T-cell (primary cell): ENCODE measurements at regions of chr16 and their contacts with region 1.

Region 1: DNA sequence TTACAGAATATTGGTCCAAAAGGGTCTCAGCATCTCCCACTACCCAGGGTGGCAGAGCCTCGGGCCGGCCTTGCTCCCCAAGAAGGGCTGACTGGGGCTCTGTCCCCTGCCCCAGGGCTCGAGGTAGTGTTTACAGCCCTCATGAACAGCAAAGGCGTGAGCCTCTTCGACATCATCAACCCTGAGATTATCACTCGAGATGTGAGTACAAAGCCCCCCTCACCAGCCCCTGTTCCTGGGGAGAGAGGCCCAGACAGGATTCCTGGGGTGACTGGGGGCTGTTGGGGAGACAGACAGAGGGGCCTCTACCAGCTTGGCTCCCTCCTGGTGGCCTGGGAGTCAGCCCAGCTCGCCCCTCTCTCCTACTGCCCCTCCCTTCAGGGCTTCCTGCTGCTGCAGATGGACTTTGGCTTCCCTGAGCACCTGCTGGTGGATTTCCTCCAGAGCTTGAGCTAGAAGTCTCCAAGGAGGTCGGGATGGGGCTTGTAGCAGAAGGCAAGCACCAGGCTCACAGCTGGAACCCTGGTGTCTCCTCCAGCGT is 6.1 kb upstream of the NLRC5 start:
- DNase-seq: no peak
- ATAC-seq: no peak
- H3K4me3 ChIP-seq: no peak overlapping the region
- H3K4me3 Mint-ChIP-seq: no peak overlapping the region
- H3K27ac ChIP-seq: no peak overlapping the region
- H3K27ac Mint-ChIP-seq: peak overlapping the region; percentile 59 to 100
- H3K4me1 ChIP-seq: peaks cover 20 to 70% of the 10 kb centered on the region in 2 experiments
- H3K4me1 Mint-ChIP-seq: peaks cover 83 to 84% (median 83%) of the 10 kb centered on the region in 3 donors
- H3K27me3 ChIP-seq: no peaks in the 10 kb centered on the region
- H3K27me3 Mint-ChIP-seq: no peaks in the 10 kb centered on the region

Region 2: GRCh38 chr16:56950051-56950450 is 33.2 kb before region 1 on chr16:
- CTCF ChIA-PET with region 1: no interaction called
- POLR2A ChIA-PET with region 1: no interaction called
- DNase-seq: no peak
- ATAC-seq: no peak
- H3K4me3 ChIP-seq: no peak overlapping the region
- H3K4me3 Mint-ChIP-seq: no peak overlapping the region
- H3K27ac ChIP-seq: no peak overlapping the region
- H3K27ac Mint-ChIP-seq: no peak overlapping the region
- H3K4me1 ChIP-seq: peaks cover 0 to 6% of the 10 kb centered on the region in 2 experiments
- H3K4me1 Mint-ChIP-seq: peaks cover 8 to 20% (median 14%) of the 10 kb centered on the region in 3 donors
- H3K27me3 ChIP-seq: no peaks in the 10 kb centered on the region
- H3K27me3 Mint-ChIP-seq: no peaks in the 10 kb centered on the region

Region 3: GRCh38 chr16:57022445-57022844 is 39.2 kb after region 1 on chr16:
- CTCF ChIA-PET with region 1: interaction called in 1 of 2 experiments, 10 read pairs
- POLR2A ChIA-PET with region 1: no interaction called
- DNase-seq: peak in 1 of 35 experiments; percentile 56
- ATAC-seq: no peak
- H3K4me3 ChIP-seq: no peak overlapping the region
- H3K4me3 Mint-ChIP-seq: peak overlapping the region; percentile 32 to 76 (median 54)
- H3K27ac ChIP-seq: peak overlapping the region; percentile 58
- H3K27ac Mint-ChIP-seq: peak overlapping the region; percentile 93 to 95
- H3K4me1 ChIP-seq: peaks cover 28 to 89% of the 10 kb centered on the region in 2 experiments
- H3K4me1 Mint-ChIP-seq: peaks cover 91 to 95% (median 93%) of the 10 kb centered on the region in 3 donors
- H3K27me3 ChIP-seq: no peaks in the 10 kb centered on the region
- H3K27me3 Mint-ChIP-seq: no peaks in the 10 kb centered on the region

Region 4: DNA sequence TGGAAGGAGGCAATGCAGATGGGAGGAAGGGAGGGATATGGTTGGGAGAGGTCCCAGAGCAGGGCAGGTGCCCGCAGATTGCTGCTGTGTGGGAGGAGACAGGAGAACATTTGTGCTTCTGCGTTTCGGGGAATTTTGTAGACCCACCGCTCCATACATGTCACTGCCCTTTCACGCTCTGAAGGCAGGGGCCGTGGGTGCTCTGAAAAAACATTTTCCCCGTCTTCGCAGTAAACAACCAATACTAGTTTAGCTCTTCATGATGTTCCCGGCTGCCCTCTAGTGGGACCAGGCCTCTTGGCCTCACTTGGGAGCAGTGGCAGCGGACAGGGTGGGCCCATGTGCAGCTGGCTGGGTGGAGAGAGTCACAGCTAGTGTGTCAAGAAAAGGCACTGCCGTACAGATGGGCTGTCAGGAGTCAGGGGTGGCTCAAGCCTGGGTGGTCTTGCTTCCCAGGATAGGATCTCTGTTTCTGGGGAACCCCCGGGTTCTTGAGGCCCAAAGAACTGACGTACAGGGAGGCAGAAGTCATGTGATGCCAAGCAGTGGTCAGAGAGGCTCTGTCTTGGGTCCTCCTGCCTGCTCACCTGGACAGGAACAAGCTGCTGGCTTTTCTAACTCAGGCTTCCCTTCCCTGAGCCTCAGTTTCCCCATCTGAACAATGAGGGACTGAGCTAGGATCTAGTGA is 62.6 kb after region 1 on chr16:
- CTCF ChIA-PET with region 1: no interaction called
- POLR2A ChIA-PET with region 1: no interaction called
- DNase-seq: peak in 23 of 35 experiments; percentile 14 to 62 (median 36)
- ATAC-seq: no peak
- H3K4me3 ChIP-seq: no peak overlapping the region
- H3K4me3 Mint-ChIP-seq: no peak overlapping the region
- H3K27ac ChIP-seq: peak overlapping the region; percentile 50
- H3K27ac Mint-ChIP-seq: peak overlapping the region; percentile 83 to 85
- H3K4me1 ChIP-seq: peaks cover 32 to 71% of the 10 kb centered on the region in 2 experiments
- H3K4me1 Mint-ChIP-seq: peaks cover 35 to 50% (median 45%) of the 10 kb centered on the region in 3 donors
- H3K27me3 ChIP-seq: no peaks in the 10 kb centered on the region
- H3K27me3 Mint-ChIP-seq: no peaks in the 10 kb centered on the region

Region 5: GRCh38 chr16:57358527-57359095 is 375.3 kb after region 1 on chr16 and contains the start of gene CCL22:
- CTCF ChIA-PET with region 1: no interaction called
- POLR2A ChIA-PET with region 1: no interaction called
- DNase-seq: no peak
- ATAC-seq: no peak
- H3K4me3 ChIP-seq: no peak within 1 kb of the TSS
- H3K4me3 Mint-ChIP-seq: no peak within 1 kb of the TSS
- H3K27ac ChIP-seq: no peak within 1 kb of the TSS
- H3K27ac Mint-ChIP-seq: no peak within 1 kb of the TSS
- H3K4me1 ChIP-seq: no peaks in the 10 kb centered on the region
- H3K4me1 Mint-ChIP-seq: no peaks in the 10 kb centered on the region
- H3K27me3 ChIP-seq: peaks cover 0 to 6% of the 10 kb centered on the region in 2 experiments
- H3K27me3 Mint-ChIP-seq: peaks cover 0 to 4% of the 10 kb centered on the region in 2 donors
- total RNA-seq, gene CCL22: 13.0 to 27.3 (median 13.0) TPM in 3 of 5 donors, not detected in the others